Activated CD4-positive, alpha-beta memory T cell treated with anti-CD3 and anti-CD28 coated beads for 36 hours (primary cell): ENCODE measurements at regions of chr5 and their contacts with region 1.

Region 1: DNA sequence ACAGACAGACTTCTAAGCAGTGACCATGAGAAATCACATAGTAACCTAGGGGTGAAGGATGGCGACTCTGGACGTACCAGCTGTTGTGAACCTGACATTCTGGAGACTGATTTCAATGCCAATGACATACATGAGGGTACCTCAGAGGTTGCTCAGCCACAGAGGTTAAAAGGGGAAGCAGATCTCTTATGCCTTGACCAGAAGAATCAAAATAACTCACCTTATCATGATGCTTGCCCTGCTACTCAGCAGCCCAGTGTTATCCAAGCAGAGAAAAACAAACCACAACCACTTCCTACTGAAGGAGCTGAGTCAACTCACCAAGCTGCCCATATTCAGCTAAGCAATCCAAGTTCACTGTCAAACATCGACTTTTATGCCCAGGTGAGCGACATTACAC is 38.0 kb upstream of the CCDC152 start:
- DNase-seq: peak; percentile 40
- H3K4me3 Mint-ChIP-seq: no peak overlapping the region
- H3K27ac Mint-ChIP-seq: no peak overlapping the region
- H3K4me1 Mint-ChIP-seq: peaks cover 19% of the 10 kb centered on the region
- H3K27me3 Mint-ChIP-seq: peaks cover 3% of the 10 kb centered on the region

Region 2: DNA sequence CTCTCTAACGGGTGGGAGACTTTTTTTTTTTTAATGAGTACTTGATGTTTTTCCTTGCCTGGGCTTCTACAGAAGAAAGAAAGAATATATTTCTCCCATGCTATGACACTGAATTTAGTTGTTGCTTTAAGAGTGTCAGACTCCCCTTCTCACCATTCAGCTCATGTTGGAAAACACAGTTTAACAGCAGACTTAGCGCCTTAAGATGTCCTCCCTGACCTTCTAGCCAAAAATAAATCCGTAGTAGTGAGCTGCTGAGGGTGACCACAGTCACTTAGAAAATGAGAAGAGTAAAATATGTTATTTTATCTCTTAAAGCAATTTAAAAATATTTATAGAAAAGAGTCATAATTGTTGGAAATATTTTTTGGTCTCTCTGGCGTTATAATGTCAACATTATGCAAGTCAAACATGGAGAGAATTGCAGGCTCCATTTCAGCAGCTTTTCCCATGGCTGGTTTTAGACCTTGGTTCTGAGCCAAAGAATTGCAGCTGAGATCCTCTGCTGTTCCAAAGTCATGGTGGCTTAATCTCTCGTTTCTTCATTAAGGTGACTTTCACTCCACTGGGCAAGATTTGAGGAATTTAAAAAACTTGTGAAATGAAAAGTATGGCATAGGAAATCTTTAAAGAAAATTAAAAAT is 151.8 kb before region 1 on chr5:
- CTCF ChIA-PET with region 1: no interaction called
- POLR2A ChIA-PET with region 1: no interaction called
- intact Hi-C with region 1: no loop called
- DNase-seq: no peak
- H3K4me3 Mint-ChIP-seq: no peak overlapping the region
- H3K27ac Mint-ChIP-seq: no peak overlapping the region
- H3K4me1 Mint-ChIP-seq: no peaks in the 10 kb centered on the region
- H3K27me3 Mint-ChIP-seq: peaks cover 2% of the 10 kb centered on the region

Region 3: DNA sequence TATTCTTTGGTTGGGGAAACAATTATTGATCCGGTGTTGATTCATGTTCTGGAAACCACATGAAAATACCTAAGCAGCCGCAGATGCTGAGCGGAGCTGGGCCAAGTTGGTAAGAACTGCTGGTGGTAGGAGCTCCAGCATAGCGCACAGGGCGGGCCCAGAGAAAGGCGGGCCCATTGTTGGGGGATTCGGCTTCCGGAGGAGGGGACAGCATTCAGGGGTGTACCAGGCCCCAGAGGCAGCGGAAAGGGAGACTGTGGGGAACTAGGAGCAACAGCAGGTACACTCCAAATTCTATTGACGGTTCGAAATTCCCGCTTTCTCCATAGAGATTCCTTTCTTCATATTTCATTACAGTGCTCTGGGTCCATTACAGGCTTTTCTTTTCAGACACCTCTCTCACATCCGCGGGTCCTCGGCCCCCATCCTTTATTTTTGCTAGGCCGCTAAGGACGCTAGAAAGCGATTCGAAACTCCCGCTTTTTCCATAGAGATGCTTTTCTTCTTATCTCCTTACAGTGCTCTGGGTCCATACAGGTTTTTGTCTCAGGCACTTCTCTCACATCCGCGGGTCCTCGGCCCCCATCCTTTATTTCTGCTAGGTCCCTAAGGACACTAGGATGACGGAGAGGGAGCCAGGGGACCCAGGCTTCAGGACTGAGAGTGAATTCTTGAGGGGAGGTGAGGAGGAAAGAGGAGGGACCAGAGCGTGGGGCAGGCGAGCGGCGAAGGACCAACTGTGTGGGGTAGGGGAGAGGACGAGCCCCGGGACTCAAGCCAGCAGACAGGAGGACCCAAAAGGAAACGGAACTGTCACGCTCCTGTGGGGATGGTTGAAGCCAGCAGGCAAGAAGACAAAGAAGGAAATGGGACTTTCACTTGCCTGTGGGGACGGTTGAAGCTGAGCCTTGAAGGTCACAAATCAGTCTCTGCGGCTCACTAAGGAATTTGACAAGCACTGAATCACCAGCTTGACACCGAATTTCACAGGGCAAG is 38.3 kb after region 1 on chr5 and contains the start of gene CCDC152:
- CTCF ChIA-PET with region 1: no interaction called
- POLR2A ChIA-PET with region 1: no interaction called
- intact Hi-C with region 1: loop called (anchors 2 kb)
- DNase-seq: peak; percentile 72
- H3K4me3 Mint-ChIP-seq: peak within 1 kb of the TSS; percentile 73
- H3K27ac Mint-ChIP-seq: no peak within 1 kb of the TSS
- H3K4me1 Mint-ChIP-seq: peaks cover 8% of the 10 kb centered on the region
- H3K27me3 Mint-ChIP-seq: peaks cover 11% of the 10 kb centered on the region
- total RNA-seq, gene CCDC152: 6.2 to 6.7 TPM